ENCODE measurements at regions of chr9 and their contacts with region 1.

Region 1: GRCh38 chr9:96667361-96667728 is 12.2 kb upstream of the PRXL2C start:
- DNase-seq: no peak
- H3K4me3 ChIP-seq: no peak overlapping the region
- H3K27me3 ChIP-seq: no peaks in the 10 kb centered on the region
- CTCF ChIP-seq: no peak

Region 2: GRCh38 chr9:96654443-96655197 is 12.7 kb before region 1 on chr9:
- CTCF ChIA-PET with region 1: interaction called, 10 read pairs
- POLR2A ChIA-PET with region 1: no interaction called
- DNase-seq: peak; percentile 50
- H3K4me3 ChIP-seq: peak overlapping the region; percentile 72
- H3K27me3 ChIP-seq: no peaks in the 10 kb centered on the region
- CTCF ChIP-seq: no peak

Region 3: DNA sequence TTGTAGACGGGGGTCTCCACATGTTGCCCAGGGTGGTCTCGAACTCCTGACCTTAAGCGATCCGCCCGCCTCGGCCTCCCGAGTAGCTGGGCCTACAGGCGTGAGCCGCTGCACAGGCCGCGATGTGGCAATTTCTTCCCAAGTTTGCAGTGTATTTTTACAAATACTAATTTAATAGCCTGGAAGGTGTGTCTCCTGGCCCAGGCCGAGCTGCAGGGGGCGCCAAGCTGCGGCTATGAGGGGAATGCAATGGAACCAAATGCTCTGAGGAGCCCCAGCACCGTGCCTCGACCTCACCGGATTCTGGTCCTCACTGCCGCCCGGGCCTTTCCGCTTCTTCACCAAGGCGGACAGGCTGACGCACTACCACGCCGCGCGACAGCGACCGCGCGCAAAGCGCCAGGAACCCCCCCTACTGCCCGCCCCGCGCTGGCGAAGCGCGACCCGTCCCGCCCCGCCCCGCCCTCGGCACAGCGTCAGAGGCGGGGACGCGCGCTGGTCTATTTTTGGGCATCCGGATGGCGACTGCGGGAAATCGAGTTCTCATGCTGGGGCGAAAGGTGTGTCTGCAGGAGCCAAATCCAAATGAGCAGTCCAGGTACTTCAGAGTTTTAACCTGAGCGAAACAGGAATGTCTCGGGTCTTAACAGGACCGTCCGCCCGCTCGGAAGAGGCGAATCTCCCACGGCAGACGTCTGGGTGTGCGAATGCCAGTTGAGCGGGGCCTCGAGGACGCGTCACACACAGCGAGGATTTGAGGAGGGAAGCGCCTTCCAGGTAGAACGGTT is 19.4 kb after region 1 on chr9:
- CTCF ChIA-PET with region 1: no interaction called
- POLR2A ChIA-PET with region 1: no interaction called
- DNase-seq: peak; percentile 22
- H3K4me3 ChIP-seq: peak overlapping the region; percentile 43
- H3K27me3 ChIP-seq: no peaks in the 10 kb centered on the region
- CTCF ChIP-seq: peak; percentile 78

Region 4: DNA sequence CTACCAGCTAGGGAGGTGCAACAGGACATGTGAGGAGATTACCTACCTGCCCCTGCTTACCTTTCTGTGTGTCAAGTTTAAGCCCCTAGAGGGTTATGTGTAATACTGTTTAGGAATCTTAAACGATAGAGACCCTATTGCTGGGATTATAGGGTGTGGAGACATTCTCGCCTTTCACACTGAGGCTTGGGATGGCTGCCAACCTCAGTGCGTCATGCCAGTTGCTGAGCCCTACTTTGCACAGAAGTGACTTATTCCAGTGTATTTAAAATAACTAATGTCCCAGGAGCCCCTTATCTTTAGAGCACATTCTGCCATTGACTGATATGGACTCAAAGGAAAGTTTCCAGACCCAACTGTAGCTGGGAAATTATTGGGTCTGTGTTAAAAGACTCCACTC is 1106.4 kb after region 1 on chr9:
- CTCF ChIA-PET with region 1: no interaction called
- POLR2A ChIA-PET with region 1: no interaction called
- DNase-seq: no peak
- H3K4me3 ChIP-seq: no peak overlapping the region
- H3K27me3 ChIP-seq: peaks cover 2% of the 10 kb centered on the region; the same call in 1 of the 2 replicates
- CTCF ChIP-seq: no peak